ENCODE measurements at regions of chr14 and their contacts with region 1.

Region 1: GRCh38 chr14:95774265-95775160 is 60.6 kb upstream of the TCL1A start:
- H3K4me3 ChIP-seq: no peak overlapping the region
- H3K27ac ChIP-seq: no peak overlapping the region
- H3K4me1 ChIP-seq: no peaks in the 10 kb centered on the region
- CTCF ChIP-seq: peak; percentile 25; the same call in 1 of the 2 replicates

Region 2: DNA sequence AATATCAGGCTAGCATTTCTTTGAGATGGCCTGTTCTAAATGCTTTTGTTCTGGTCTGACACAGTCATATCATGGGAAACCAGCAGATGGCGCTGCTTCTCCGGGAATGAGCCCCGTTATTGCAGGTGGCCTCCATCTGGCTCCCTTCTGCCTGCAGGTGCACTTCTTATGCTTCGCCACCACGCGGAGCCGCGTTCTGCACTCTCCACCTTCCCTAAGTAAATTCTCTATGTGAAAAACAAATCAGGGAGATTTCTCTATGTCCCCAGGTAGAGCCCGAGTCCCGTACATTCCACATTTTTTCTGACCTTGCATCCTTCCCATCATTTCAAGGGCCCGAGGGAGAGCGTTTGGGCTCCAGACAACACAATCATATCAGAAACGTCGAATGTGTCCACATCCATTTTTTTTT is 213.5 kb before region 1 on chr14:
- CTCF ChIA-PET with region 1: interaction called, 17 read pairs
- POLR2A ChIA-PET with region 1: no interaction called
- H3K4me3 ChIP-seq: no peak overlapping the region
- H3K27ac ChIP-seq: no peak overlapping the region
- H3K4me1 ChIP-seq: no peaks in the 10 kb centered on the region
- CTCF ChIP-seq: peak; percentile 96

Region 3: DNA sequence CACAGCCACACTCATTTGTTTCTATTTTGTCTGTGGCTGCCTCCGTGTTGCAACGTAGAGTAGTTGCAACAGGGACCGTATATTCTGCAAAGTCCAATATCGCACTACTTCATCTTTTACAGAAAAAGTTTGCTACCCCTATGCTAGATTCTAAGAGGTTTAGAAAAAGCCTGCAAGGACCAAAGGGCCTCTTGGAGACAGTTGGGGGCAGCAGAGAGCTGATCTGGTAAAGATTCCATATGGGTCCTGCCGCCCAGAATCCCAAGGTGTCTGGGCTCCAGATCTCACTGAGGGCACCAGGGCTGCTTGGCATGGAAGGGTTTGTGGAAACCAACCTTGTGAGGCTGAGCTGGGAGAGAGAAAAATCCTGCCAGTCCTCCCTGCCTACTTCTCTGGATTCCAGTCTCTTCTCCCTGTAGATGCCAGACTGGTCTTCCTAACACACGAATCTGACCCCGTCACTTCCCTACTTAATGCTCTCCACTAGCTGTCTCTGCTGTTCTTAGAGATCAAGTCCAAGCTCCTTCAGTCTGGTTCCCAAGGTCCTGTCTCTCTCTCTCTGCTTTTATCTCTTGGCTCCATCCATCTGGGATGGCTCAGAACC is 165.0 kb before region 1 on chr14:
- CTCF ChIA-PET with region 1: interaction called, 10 read pairs
- POLR2A ChIA-PET with region 1: no interaction called
- H3K4me3 ChIP-seq: no peak overlapping the region
- H3K27ac ChIP-seq: no peak overlapping the region
- H3K4me1 ChIP-seq: no peaks in the 10 kb centered on the region
- CTCF ChIP-seq: 0 out of 2 replicates have a peak, but pooled peaks have one; percentile 15

Region 4: GRCh38 chr14:95619785-95620417 is 154.6 kb before region 1 on chr14:
- CTCF ChIA-PET with region 1: interaction called, 12 read pairs
- POLR2A ChIA-PET with region 1: no interaction called
- H3K4me3 ChIP-seq: no peak overlapping the region
- H3K27ac ChIP-seq: no peak overlapping the region
- H3K4me1 ChIP-seq: no peaks in the 10 kb centered on the region
- CTCF ChIP-seq: no peak

Measured in HEK293 (cell line).